Transverse colon (tissue), 4 donors: ENCODE measurements at regions of chr12 and their contacts with region 1.

Region 1: DNA sequence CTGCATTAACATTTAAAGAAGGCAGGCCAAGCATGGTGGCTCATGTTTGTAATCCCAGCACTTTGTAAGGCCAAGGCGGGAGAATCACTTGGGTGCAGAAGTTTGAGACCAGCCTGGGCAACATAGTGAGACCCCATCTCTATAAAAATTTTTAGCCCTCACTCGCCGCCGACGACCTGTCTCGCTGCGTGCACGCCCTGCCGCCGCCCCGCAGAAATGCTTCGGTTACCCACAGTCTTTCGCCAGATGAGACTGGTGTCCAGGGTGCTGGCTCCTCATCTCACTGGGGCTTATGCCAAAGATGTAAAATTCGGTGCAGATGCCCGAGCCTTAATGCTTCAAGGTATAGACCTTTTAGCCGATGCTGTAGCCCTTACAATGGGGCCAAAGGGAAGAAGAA is 10.8 kb upstream of the RBMS2 start:
- DNase-seq: no peak
- H3K4me3 ChIP-seq: no peak overlapping the region
- H3K27ac ChIP-seq: no peak overlapping the region
- H3K4me1 ChIP-seq: peaks cover 0 to 6% (median 0%) of the 10 kb centered on the region in 4 donors
- H3K27me3 ChIP-seq: no peaks in the 10 kb centered on the region
- CTCF ChIP-seq: no peak
- EP300 ChIP-seq: no peak
- POLR2A ChIP-seq: no peak

Region 2: GRCh38 chr12:56578983-56579546 is 68.3 kb after region 1 on chr12:
- in situ Hi-C with region 1: loop called (anchors 5 to 10 kb)
- intact Hi-C with region 1: no loop called
- DNase-seq: no peak
- H3K4me3 ChIP-seq: no peak overlapping the region
- H3K27ac ChIP-seq: no peak overlapping the region
- H3K4me1 ChIP-seq: no peaks in the 10 kb centered on the region
- H3K27me3 ChIP-seq: no peaks in the 10 kb centered on the region
- CTCF ChIP-seq: no peak
- EP300 ChIP-seq: no peak
- POLR2A ChIP-seq: no peak